PC-3 (cell line): ENCODE measurements at regions of chr5 and their contacts with region 1.

Region 1: GRCh38 chr5:94524841-94525697 is 93.3 kb downstream of the KIAA0825 start:
- DNase-seq: peak; percentile 53
- ATAC-seq: peak; percentile 65
- H3K4me3 ChIP-seq: no peak overlapping the region
- H3K27ac ChIP-seq: no peak overlapping the region
- H3K4me1 ChIP-seq: peaks cover 16% of the 10 kb centered on the region
- H3K27me3 ChIP-seq: no peaks in the 10 kb centered on the region
- CTCF ChIP-seq: peak; percentile 73

Region 2: DNA sequence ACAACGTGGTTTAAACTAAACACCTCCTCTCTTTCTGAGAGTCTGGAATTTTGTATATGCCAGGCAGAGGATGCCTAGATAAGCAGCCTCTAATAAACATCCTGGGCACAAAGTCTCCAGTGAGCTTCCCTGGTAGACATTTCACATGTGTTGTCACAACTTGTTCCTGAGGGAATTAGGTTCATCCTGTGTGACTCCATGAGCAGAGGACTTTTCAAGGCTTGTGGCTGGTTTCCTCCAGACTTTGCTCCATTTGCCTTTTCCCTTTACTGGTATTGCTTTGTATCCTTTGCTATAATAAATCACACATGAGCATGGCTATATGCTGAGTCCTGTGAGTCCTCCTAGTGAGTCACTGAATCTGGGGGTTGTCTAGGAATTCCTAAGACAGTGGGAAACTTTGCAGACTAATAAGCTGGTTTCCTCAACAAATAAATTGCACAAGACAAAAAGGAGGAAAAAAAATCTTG is 1021.4 kb before region 1 on chr5:
- CTCF ChIA-PET with region 1: no interaction called
- POLR2A ChIA-PET with region 1: no interaction called
- intact Hi-C with region 1: no loop called
- DNase-seq: peak; percentile 79
- ATAC-seq: peak; percentile 88
- H3K4me3 ChIP-seq: no peak overlapping the region
- H3K27ac ChIP-seq: peak overlapping the region; percentile 31
- H3K4me1 ChIP-seq: peaks cover 12% of the 10 kb centered on the region
- H3K27me3 ChIP-seq: no peaks in the 10 kb centered on the region
- CTCF ChIP-seq: no peak

Region 3: GRCh38 chr5:94153736-94154450 is 371.2 kb before region 1 on chr5:
- CTCF ChIA-PET with region 1: no interaction called
- POLR2A ChIA-PET with region 1: no interaction called
- intact Hi-C with region 1: loop called (anchors 10 kb)
- DNase-seq: no peak
- ATAC-seq: no peak
- H3K4me3 ChIP-seq: no peak overlapping the region
- H3K27ac ChIP-seq: no peak overlapping the region
- H3K4me1 ChIP-seq: no peaks in the 10 kb centered on the region
- H3K27me3 ChIP-seq: no peaks in the 10 kb centered on the region
- CTCF ChIP-seq: no peak

Region 4: GRCh38 chr5:94366811-94367210 is 158.3 kb before region 1 on chr5:
- CTCF ChIA-PET with region 1: no interaction called
- POLR2A ChIA-PET with region 1: no interaction called
- intact Hi-C with region 1: loop called (anchors 5 kb)
- DNase-seq: peak; percentile 21
- ATAC-seq: no peak
- H3K4me3 ChIP-seq: no peak overlapping the region
- H3K27ac ChIP-seq: peak overlapping the region; percentile 36
- H3K4me1 ChIP-seq: peaks cover 22% of the 10 kb centered on the region
- H3K27me3 ChIP-seq: no peaks in the 10 kb centered on the region
- CTCF ChIP-seq: no peak

Region 5: DNA sequence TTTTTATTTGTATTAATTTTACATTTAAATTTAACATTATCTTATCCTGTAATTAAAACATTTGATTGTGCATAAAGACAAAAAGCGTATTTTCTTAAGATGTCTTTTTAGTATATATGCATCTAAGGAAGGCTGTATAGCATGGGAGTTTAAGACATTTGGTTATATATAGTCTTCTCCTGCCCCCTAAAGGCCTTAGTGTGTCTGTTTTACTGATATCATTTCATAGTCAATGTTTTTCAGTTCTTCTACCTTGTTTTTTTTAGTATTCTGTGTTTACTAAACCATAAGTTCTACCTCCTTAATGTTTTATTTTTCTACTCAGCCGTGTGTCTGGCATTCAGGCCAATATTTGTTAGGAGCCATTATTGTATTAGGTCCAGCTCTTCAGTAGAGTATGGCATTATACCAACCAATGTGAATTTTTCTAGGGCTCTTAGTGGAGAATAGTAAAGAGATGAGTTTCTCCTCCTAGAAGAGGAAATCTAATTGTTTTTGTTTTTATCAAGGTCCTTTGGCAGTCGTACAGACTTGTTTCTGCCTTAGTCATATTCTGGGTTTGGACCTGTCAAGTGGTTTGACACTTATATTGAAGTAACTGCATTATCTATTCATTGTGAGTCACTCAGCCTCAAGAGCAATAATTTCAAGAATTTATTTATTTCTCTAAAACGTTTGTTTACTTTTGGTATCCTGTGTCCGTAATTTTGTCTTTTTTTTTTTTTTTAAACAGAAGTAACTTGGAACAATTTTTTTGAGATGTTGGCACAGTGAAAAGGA is 168.2 kb after region 1 on chr5:
- CTCF ChIA-PET with region 1: no interaction called
- POLR2A ChIA-PET with region 1: no interaction called
- intact Hi-C with region 1: loop called (anchors 2 kb)
- DNase-seq: peak; percentile 70
- ATAC-seq: peak; percentile 88
- H3K4me3 ChIP-seq: no peak overlapping the region
- H3K27ac ChIP-seq: peak overlapping the region; percentile 34; the same call in 1 of the 2 replicates
- H3K4me1 ChIP-seq: peaks cover 15% of the 10 kb centered on the region
- H3K27me3 ChIP-seq: no peaks in the 10 kb centered on the region
- CTCF ChIP-seq: peak; percentile 56

Region 6: GRCh38 chr5:94849821-94850736 is 325.0 kb after region 1 on chr5:
- CTCF ChIA-PET with region 1: no interaction called
- POLR2A ChIA-PET with region 1: no interaction called
- intact Hi-C with region 1: loop called (anchors 10 kb)
- DNase-seq: peak; percentile 51
- ATAC-seq: peak; percentile 64; the same call in 1 of the 2 replicates
- H3K4me3 ChIP-seq: no peak overlapping the region
- H3K27ac ChIP-seq: no peak overlapping the region
- H3K4me1 ChIP-seq: no peaks in the 10 kb centered on the region
- H3K27me3 ChIP-seq: no peaks in the 10 kb centered on the region
- CTCF ChIP-seq: peak; percentile 78